GM18951 (cell line): ENCODE measurements at regions of chr1 and their contacts with region 1.

Region 1: GRCh38 chr1:174999216-174999925 is 376 bp upstream of the CACYBP start:
- POLR2A ChIP-seq: peak; percentile 93

Region 2: DNA sequence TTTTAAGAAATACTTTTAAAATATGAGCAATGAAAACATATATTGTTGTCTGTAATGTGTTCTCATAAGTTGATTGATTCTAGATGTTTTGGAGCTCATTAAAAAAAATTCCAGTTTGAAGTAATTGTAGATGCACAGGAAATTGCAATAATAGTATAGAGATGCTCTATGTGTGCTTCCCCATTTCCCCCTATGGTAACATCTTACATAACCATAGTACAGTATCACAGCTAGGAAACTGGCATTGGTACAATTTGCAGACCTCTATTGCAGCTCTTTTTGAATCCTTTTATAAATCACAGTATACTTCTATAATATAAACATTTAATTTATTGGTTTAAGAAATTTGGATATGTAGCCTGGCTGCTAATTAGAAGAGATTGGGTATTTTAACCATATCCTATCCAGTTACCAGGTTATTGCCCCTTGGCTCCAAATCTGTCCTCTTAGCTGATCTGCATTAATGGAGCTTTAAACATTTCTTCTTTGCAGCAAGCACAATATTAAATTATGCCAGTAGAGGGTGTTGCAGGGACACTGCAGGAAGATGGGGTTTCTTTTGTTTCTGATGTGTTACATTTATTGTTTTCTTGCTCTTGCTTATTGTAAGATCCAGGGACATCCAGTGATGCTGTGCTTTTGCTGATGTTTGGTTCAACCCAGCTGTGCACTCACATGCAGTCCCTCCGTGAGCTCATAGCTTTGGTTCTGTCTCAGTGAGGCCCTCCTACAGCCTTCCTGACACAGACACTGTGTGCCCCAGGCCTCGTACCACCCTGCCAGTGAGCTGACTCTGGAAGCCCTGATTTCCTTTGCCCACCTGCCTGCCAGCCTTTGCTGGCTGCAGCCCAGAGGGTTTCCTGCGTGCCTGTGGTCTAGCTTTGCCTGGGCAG is 736.8 kb before region 1 on chr1:
- in situ Hi-C with region 1: loop called (anchors 25 kb)
- POLR2A ChIP-seq: no peak

Region 3: DNA sequence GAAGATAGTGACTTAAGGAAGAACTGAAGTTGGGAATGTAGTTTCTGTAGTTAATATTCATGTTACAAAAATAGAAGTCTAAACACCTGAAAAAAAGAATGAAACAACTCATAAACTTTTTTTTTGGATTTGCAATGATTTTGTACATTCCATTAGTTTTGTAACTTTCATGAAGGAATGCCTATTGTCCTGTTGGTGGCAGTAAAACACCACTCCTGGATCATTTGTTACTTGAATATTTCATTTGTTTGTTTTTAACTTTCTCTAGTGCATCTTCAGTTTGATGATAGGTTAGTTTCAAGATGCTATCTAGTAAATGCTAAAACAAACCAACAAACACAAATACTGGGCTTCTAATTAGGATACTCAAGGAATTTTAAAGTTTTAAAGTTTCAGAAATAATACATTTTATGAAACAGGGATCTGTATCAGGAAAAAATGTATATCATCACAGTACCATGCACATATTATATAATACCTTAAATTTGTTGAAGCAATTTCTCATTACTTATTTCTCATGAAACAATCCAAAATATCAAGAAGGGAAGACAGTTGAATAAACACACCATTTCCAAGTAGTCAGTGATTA is 229.3 kb before region 1 on chr1:
- in situ Hi-C with region 1: loop called (anchors 10 kb)
- POLR2A ChIP-seq: no peak